GM18951 (cell line): ENCODE measurements at regions of chr17 and their contacts with region 1.

Region 1: GRCh38 chr17:43760254-43760852 is 1.8 kb upstream of the SOST start:
- POLR2A ChIP-seq: no peak

Region 2: DNA sequence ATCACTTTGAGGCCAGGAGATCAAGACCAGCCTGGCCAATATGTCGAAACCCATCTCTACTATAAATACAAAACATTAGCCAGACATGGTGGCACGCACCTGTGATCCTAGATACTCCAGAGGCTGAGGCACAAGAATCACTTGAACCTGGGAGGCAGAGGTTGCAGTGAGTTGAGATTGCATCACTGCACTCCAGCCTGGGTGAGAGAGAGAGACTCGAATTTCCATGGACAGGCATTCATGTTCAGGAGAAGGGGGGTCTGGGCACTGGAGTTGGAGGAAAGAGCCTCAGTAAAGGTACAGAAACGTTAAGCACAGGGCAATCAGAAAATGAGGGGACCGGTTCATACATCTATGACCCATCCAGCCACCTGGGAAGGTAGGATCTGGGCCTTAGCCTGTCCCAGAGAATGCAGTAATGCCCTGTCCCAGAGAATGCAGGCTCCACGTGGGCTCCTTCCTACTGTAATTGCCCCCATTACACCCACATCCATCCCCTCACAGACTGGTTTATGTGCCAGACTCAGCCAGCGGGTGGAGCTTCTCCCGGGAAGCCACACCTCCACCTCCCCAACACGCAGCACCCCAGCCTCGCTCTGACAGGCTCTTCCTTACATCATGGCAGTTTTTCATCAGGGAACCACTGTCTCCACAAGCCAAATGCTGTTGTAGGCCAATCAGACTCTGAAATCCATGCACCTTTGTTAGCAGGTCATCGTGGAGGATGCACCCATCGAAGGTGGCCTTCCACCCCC is 383.1 kb before region 1 on chr17:
- in situ Hi-C with region 1: no loop called
- POLR2A ChIP-seq: no peak

Region 3: GRCh38 chr17:43576563-43577229 is 183.7 kb before region 1 on chr17:
- in situ Hi-C with region 1: loop called (anchors 10 kb)
- POLR2A ChIP-seq: no peak

Region 4: GRCh38 chr17:43689814-43690213 is 70.5 kb before region 1 on chr17:
- in situ Hi-C with region 1: loop called (anchors 5 kb)
- POLR2A ChIP-seq: no peak